Right cardiac atrium (tissue), 5 donors: ENCODE measurements at regions of chr18 and their contacts with region 1.

Region 1: GRCh38 chr18:48037481-48038271 is 107.2 kb upstream of the SMAD2 start:
- DNase-seq: peak in 2 of 3 donors; percentile 57 to 64
- ATAC-seq: peak; percentile 36 to 55
- H3K4me3 ChIP-seq: no peak overlapping the region
- H3K27ac ChIP-seq: no peak overlapping the region
- H3K4me1 ChIP-seq: no peaks in the 10 kb centered on the region
- H3K27me3 ChIP-seq: no peaks in the 10 kb centered on the region

Region 2: GRCh38 chr18:48230467-48231113 is 192.9 kb after region 1 on chr18:
- intact Hi-C with region 1: no loop called
- DNase-seq: peak; percentile 60 to 87 (median 80)
- ATAC-seq: peak; percentile 56 to 57
- H3K4me3 ChIP-seq: no peak overlapping the region
- H3K27ac ChIP-seq: no peak overlapping the region
- H3K4me1 ChIP-seq: peaks cover 15% of the 10 kb centered on the region
- H3K27me3 ChIP-seq: no peaks in the 10 kb centered on the region

Region 3: DNA sequence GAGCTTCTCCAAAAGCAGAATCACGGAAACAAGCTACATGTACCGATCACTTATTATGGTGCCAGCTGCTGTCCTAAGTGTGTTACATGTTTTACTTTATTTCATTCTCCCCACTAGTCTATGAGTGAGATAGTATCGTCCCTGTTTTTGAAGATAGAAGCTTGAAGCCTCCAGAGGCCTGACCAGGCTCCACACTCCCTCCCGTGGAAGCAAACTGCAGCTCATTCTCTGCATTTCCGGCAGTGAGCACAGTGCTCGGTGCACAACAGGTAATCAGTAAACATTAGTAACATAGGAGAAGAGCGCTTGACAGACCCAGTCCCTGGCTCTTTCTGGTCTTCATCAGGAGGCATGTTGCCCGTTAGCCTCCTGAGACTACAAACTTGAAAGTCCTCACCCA is 298.7 kb after region 1 on chr18:
- intact Hi-C with region 1: loop called in 1 of 4 experiments (anchors 5 kb)
- DNase-seq: no peak
- ATAC-seq: no peak
- H3K4me3 ChIP-seq: no peak overlapping the region
- H3K27ac ChIP-seq: no peak overlapping the region
- H3K4me1 ChIP-seq: peaks cover 2% of the 10 kb centered on the region
- H3K27me3 ChIP-seq: no peaks in the 10 kb centered on the region